ENCODE measurements at regions of chr19 and their contacts with region 1.

Region 1: GRCh38 chr19:2519482-2519881 is 43.6 kb downstream of the GADD45B start:
- DNase-seq: no peak
- H3K4me3 ChIP-seq: no peak overlapping the region
- H3K27ac ChIP-seq: no peak overlapping the region
- H3K27me3 ChIP-seq: no peaks in the 10 kb centered on the region
- CTCF ChIP-seq: no peak

Region 2: GRCh38 chr19:2385053-2385721 is 134.3 kb before region 1 on chr19:
- CTCF ChIA-PET with region 1: no interaction called
- POLR2A ChIA-PET with region 1: no interaction called
- DNase-seq: peak; percentile 27
- H3K4me3 ChIP-seq: no peak overlapping the region
- H3K27ac ChIP-seq: no peak overlapping the region
- H3K27me3 ChIP-seq: peaks cover 7% of the 10 kb centered on the region
- CTCF ChIP-seq: no peak

Region 3: GRCh38 chr19:2543463-2544442 is 24.3 kb after region 1 on chr19:
- CTCF ChIA-PET with region 1: no interaction called
- POLR2A ChIA-PET with region 1: interaction called, 13 read pairs
- DNase-seq: peak; percentile 93
- H3K4me3 ChIP-seq: peak overlapping the region; percentile 39
- H3K27ac ChIP-seq: peak overlapping the region; percentile 99
- H3K27me3 ChIP-seq: no peaks in the 10 kb centered on the region
- CTCF ChIP-seq: peak; percentile 38

Measured in AG04450 (cell line).